ENCODE measurements at regions of chr4 and their contacts with region 1.

Region 1: DNA sequence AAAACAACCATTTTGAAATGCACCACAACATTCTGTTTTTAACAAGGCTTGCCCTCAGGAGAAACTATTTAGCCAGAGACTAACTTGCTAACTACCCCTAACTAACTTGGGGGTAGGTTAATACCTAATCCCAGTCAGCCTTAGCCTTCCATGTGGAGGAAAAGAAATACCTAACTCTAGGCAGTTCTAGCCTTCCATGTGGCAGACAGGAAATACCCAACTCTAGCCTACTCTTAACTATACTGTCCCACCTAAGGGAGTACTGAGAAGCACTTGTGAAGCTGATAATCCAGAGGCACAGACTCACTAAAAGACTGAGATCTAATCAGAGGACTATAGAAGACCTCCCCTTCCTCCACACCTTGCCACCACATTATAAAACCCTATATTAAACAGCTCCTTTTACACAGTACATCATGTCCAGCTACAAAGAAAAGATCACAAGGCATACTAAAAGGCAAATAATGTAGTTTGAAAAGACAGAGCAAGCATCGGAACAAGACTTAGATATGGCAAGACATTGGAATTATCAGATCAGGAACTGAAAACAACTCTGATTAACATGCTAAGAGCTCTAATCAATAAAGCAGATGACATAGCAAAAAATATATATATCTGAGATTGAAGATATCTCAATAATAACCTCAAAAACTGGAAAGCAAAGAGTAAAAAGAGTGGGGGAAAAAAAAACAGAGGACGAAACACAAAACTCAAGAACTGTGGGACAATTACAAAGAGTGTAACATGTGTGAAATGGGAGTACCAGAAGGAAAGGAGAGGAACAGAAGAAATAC is 52.2 kb downstream of the FRYL start:
- DNase-seq: no peak
- H3K4me3 Mint-ChIP-seq: no peak overlapping the region
- H3K27ac Mint-ChIP-seq: no peak overlapping the region
- H3K4me1 Mint-ChIP-seq: peaks cover 88% of the 10 kb centered on the region
- H3K27me3 Mint-ChIP-seq: no peaks in the 10 kb centered on the region

Region 2: GRCh38 chr4:48375651-48376293 is 352.1 kb before region 1 on chr4:
- CTCF ChIA-PET with region 1: no interaction called
- POLR2A ChIA-PET with region 1: no interaction called
- intact Hi-C with region 1: no loop called
- DNase-seq: no peak
- H3K4me3 Mint-ChIP-seq: no peak overlapping the region
- H3K27ac Mint-ChIP-seq: no peak overlapping the region
- H3K4me1 Mint-ChIP-seq: peaks cover under 1% of the 10 kb centered on the region
- H3K27me3 Mint-ChIP-seq: no peaks in the 10 kb centered on the region

Region 3: GRCh38 chr4:48692044-48692443 is 35.8 kb before region 1 on chr4:
- CTCF ChIA-PET with region 1: no interaction called
- POLR2A ChIA-PET with region 1: no interaction called
- intact Hi-C with region 1: no loop called
- DNase-seq: no peak
- H3K4me3 Mint-ChIP-seq: no peak overlapping the region
- H3K27ac Mint-ChIP-seq: no peak overlapping the region
- H3K4me1 Mint-ChIP-seq: peaks cover 31% of the 10 kb centered on the region
- H3K27me3 Mint-ChIP-seq: no peaks in the 10 kb centered on the region

Region 4: DNA sequence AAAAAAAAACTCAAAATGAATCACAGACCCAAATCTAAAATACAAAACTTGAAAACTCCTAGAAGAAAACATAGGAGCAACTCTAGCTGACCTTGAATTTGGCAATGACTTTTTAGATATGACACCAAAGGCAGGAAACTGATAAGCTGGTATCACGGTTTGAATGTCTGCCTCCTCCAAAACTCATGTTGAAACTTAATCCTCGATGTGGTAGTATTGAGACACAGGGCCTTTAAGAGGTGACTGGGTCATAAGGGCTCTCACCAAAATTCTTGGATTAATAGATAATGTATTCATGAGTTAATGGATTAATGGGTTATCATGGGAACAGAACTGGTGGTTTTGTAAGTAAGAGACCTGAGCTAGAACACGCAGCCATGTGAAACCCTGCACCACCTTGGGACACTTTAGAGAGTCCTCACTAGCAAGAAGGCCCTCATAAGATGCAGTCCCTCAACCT is 11.7 kb after region 1 on chr4:
- CTCF ChIA-PET with region 1: no interaction called
- POLR2A ChIA-PET with region 1: interaction called, 3 read pairs
- intact Hi-C with region 1: loop called (anchors 1 kb)
- DNase-seq: no peak
- H3K4me3 Mint-ChIP-seq: no peak overlapping the region
- H3K27ac Mint-ChIP-seq: peak overlapping the region; percentile 38
- H3K4me1 Mint-ChIP-seq: peaks cover 69% of the 10 kb centered on the region
- H3K27me3 Mint-ChIP-seq: no peaks in the 10 kb centered on the region

Region 5: GRCh38 chr4:48752726-48753125 is 24.9 kb after region 1 on chr4:
- CTCF ChIA-PET with region 1: no interaction called
- POLR2A ChIA-PET with region 1: no interaction called
- intact Hi-C with region 1: no loop called
- DNase-seq: no peak
- H3K4me3 Mint-ChIP-seq: no peak overlapping the region
- H3K27ac Mint-ChIP-seq: no peak overlapping the region
- H3K4me1 Mint-ChIP-seq: peaks cover 74% of the 10 kb centered on the region
- H3K27me3 Mint-ChIP-seq: no peaks in the 10 kb centered on the region